ENCODE measurements at regions of chr10 and their contacts with region 1.

Region 1: DNA sequence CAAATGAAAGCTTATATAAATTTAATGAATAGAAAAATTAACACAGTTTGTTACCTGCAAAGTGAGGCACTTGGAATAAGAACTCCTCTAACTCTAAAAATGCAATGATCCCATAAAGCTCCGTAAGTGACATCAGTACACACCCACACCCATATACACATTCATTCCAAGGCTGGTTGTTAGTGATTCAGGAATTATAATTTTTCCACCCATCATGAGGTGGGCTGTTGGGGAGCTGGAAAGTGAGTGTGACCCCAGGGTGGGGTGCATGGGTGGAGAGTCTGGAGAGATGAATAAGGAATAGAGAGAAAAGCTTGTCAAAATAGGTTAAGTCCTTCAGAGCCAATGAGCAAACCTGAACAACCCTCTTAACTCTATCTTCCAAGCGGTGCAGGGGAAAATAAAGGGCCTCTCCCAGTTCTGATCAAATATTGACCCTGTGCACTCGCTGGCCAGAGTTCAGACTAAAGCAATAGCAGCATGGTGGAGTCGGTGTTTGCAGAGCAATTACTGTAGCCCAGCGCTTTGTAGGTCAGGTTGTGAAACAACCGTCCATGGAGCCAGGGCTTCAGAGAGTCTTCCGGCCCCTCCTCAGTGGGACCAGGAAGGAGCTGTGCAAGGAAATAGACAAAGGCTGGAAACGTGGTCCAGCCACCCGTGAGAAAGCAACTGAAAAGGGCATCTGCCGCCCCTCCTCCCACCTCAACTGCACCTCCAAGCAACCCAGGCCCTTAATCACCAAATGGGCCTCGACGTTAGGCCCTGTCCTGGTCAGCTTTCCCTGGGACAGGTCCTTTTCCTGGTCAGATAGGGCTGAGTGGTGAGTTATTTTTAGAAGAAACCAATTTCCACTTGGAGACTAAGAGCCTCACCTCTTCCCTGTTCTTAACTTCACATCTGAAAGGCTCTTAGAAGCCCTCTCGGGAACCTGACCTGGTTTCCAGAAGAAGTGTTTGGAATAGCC is 61.2 kb downstream of the SH3PXD2A start:
- DNase-seq: peak; percentile 94 to 97
- H3K4me3 ChIP-seq: 0 out of 2 replicates have a peak overlapping the region, but pooled peaks have one; percentile 1
- H3K4me3 Mint-ChIP-seq: peak overlapping the region; percentile 62
- H3K27ac Mint-ChIP-seq: peak overlapping the region; percentile 90
- H3K4me1 ChIP-seq: peaks cover 49% of the 10 kb centered on the region
- H3K4me1 Mint-ChIP-seq: peaks cover 31% of the 10 kb centered on the region
- H3K27me3 ChIP-seq: no peaks in the 10 kb centered on the region
- H3K27me3 Mint-ChIP-seq: no peaks in the 10 kb centered on the region
- CTCF ChIP-seq: no peak

Region 2: GRCh38 chr10:103528556-103528955 is 265.6 kb before region 1 on chr10:
- CTCF ChIA-PET with region 1: no interaction called
- POLR2A ChIA-PET with region 1: no interaction called
- intact Hi-C with region 1: no loop called
- DNase-seq: no peak
- H3K4me3 ChIP-seq: no peak overlapping the region
- H3K4me3 Mint-ChIP-seq: no peak overlapping the region
- H3K27ac Mint-ChIP-seq: no peak overlapping the region
- H3K4me1 ChIP-seq: peaks cover 22% of the 10 kb centered on the region
- H3K4me1 Mint-ChIP-seq: no peaks in the 10 kb centered on the region
- H3K27me3 ChIP-seq: no peaks in the 10 kb centered on the region
- H3K27me3 Mint-ChIP-seq: no peaks in the 10 kb centered on the region
- CTCF ChIP-seq: no peak

Region 3: GRCh38 chr10:103772096-103772845 is 21.9 kb before region 1 on chr10:
- CTCF ChIA-PET with region 1: interaction called, 4 read pairs
- POLR2A ChIA-PET with region 1: interaction called, 7 read pairs
- intact Hi-C with region 1: loop called (anchors 1 kb)
- DNase-seq: peak; percentile 62 to 65
- H3K4me3 ChIP-seq: peak overlapping the region; percentile 35
- H3K4me3 Mint-ChIP-seq: peak overlapping the region; percentile 82
- H3K27ac Mint-ChIP-seq: peak overlapping the region; percentile 53
- H3K4me1 ChIP-seq: no peaks in the 10 kb centered on the region
- H3K4me1 Mint-ChIP-seq: peaks cover 13% of the 10 kb centered on the region
- H3K27me3 ChIP-seq: no peaks in the 10 kb centered on the region
- H3K27me3 Mint-ChIP-seq: no peaks in the 10 kb centered on the region
- CTCF ChIP-seq: no peak

Region 4: DNA sequence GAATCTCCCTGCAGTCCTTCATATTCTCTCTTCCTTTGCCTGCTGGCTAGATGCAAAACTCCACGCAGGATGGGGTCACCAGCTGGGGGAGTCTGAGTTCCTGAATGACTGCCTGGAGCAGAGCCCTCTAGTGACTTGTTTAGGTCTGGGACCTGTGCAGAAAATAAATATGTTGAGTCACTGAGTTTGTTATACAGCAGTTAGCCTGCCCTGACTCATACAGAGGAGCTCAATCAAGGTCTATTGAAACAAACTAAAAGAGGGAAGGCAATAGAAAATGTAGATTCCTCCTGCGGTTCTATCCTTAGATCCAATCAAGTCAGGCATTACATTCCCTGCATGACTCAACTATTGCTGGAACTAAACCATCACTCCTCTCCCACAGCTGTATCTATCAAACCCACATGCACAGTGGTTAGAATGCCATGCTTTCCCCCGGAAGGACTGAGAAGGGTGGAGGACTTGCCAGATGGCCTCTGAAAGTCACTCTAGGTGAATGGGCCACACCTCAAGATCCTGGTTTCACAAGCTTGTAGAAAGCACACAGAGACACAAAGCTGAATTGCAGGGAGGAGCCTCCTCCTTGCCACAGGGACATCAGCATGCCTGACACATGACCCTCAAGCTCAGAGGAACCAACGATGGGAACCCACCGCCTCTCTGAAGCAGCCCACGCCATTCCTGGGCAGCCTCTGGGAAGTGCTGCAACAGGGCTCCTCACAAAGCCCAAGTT is 12.7 kb before region 1 on chr10:
- CTCF ChIA-PET with region 1: interaction called, 12 read pairs
- POLR2A ChIA-PET with region 1: interaction called, 5 read pairs
- intact Hi-C with region 1: loop called (anchors 1 kb)
- DNase-seq: peak in 1 of 2 experiments; percentile 56
- H3K4me3 ChIP-seq: no peak overlapping the region
- H3K4me3 Mint-ChIP-seq: no peak overlapping the region
- H3K27ac Mint-ChIP-seq: no peak overlapping the region
- H3K4me1 ChIP-seq: 0 out of 2 replicates have a peak, but pooled peaks cover 8% of the 10 kb centered on the region
- H3K4me1 Mint-ChIP-seq: peaks cover 30% of the 10 kb centered on the region
- H3K27me3 ChIP-seq: no peaks in the 10 kb centered on the region
- H3K27me3 Mint-ChIP-seq: no peaks in the 10 kb centered on the region
- CTCF ChIP-seq: peak; percentile 35 to 42

Region 5: GRCh38 chr10:103828587-103829197 is 34.5 kb after region 1 on chr10:
- CTCF ChIA-PET with region 1: interaction called, 4 read pairs
- POLR2A ChIA-PET with region 1: no interaction called
- intact Hi-C with region 1: loop called (anchors 1 kb)
- DNase-seq: no peak
- H3K4me3 ChIP-seq: no peak overlapping the region
- H3K4me3 Mint-ChIP-seq: no peak overlapping the region
- H3K27ac Mint-ChIP-seq: no peak overlapping the region
- H3K4me1 ChIP-seq: peaks cover 33% of the 10 kb centered on the region
- H3K4me1 Mint-ChIP-seq: peaks cover 22% of the 10 kb centered on the region
- H3K27me3 ChIP-seq: no peaks in the 10 kb centered on the region
- H3K27me3 Mint-ChIP-seq: no peaks in the 10 kb centered on the region
- CTCF ChIP-seq: no peak

Region 6: DNA sequence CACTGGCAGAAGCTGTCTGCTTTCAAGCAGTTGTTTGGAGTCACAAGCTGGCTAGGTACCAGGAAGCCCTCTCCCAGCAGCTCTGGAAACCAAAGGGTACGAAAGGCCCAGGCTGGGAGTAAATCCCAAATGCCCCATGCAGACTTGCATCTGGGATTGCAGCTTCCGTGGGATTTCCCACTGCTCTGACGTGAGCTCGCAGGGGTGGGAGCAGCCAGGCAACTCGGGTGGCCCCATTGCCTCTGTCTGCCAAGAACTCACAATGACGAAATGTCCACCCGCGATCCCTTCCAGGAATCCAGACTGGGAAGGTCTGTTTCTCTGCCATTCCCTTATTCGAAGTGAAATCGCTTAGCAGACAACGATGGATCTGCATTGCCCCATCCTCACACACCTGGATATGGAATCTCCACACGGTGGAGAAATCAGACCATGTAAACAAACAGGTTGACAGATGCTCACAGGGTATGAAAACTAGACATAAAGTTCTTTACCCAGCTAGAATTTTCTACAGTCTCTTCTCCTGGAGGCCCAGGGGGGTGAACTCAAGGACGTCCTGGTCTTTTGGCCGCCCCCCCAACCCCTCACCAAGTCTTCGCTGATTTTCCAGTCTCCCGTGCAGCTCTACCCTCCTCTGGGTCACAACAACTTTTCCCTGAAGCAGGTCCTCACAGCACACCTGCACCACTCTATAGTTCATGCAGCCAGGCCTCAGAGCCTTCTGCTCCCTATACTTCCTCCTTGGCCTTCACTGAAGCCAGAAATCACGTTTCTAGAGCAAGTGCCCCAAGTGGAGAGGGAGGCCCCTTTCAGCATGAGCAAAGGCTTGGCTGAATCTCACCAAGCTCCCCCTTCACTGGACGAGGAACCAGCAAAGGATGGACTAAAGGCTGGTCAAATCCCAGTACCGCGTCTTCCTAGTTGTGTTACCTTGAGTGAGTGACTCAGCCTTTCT is 41.2 kb after region 1 on chr10:
- CTCF ChIA-PET with region 1: interaction called, 4 read pairs
- POLR2A ChIA-PET with region 1: interaction called, 4 read pairs
- intact Hi-C with region 1: loop called (anchors 1 kb)
- DNase-seq: no peak
- H3K4me3 ChIP-seq: no peak overlapping the region
- H3K4me3 Mint-ChIP-seq: no peak overlapping the region
- H3K27ac Mint-ChIP-seq: no peak overlapping the region
- H3K4me1 ChIP-seq: peaks cover 32% of the 10 kb centered on the region
- H3K4me1 Mint-ChIP-seq: peaks cover 26% of the 10 kb centered on the region
- H3K27me3 ChIP-seq: no peaks in the 10 kb centered on the region
- H3K27me3 Mint-ChIP-seq: no peaks in the 10 kb centered on the region
- CTCF ChIP-seq: no peak